Activated naive CD4-positive, alpha-beta T cell treated with anti-CD3 and anti-CD28 coated beads for 36 hours (primary cell): ENCODE measurements at regions of chr5 and their contacts with region 1.

Region 1: GRCh38 chr5:32613050-32613672 is 27.8 kb downstream of the SUB1 start:
- DNase-seq: peak; percentile 94
- H3K4me3 Mint-ChIP-seq: no peak overlapping the region
- H3K27ac Mint-ChIP-seq: no peak overlapping the region
- H3K4me1 Mint-ChIP-seq: peaks cover 3% of the 10 kb centered on the region
- H3K27me3 Mint-ChIP-seq: no peaks in the 10 kb centered on the region

Region 2: GRCh38 chr5:31825518-31826068 is 787.6 kb before region 1 on chr5:
- CTCF ChIA-PET with region 1: no interaction called
- intact Hi-C with region 1: loop called (anchors 5 kb)
- DNase-seq: peak; percentile 73
- H3K4me3 Mint-ChIP-seq: no peak overlapping the region
- H3K27ac Mint-ChIP-seq: no peak overlapping the region
- H3K4me1 Mint-ChIP-seq: peaks cover 1% of the 10 kb centered on the region
- H3K27me3 Mint-ChIP-seq: no peaks in the 10 kb centered on the region

Region 3: DNA sequence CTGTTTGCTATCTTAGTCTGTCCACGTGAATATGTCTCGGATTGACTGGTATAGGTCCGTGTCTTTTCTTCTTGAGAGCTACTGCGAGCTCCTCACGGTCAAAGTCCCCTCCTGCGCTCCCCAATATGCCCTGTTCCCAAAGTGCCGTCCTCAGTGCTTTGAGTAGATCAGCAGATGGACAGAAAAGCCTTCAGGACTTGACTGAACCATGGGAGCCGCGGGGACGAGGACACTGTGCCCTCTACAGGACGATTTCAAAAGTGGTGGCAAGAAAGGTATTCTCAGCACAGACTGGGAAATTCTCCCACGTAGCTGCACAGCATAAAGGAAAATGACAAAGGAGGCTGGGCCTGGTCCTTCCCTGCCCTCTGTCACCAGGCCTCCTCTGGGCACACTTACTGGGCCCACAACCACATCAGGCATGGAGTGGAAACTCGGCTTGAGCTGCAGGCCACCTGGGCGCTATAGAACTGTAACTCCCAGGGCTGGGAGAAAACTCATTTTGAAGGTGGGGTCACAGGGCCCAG is 283.8 kb before region 1 on chr5:
- CTCF ChIA-PET with region 1: no interaction called
- intact Hi-C with region 1: loop called (anchors 1 kb)
- DNase-seq: peak; percentile 75
- H3K4me3 Mint-ChIP-seq: no peak overlapping the region
- H3K27ac Mint-ChIP-seq: no peak overlapping the region
- H3K4me1 Mint-ChIP-seq: no peaks in the 10 kb centered on the region
- H3K27me3 Mint-ChIP-seq: no peaks in the 10 kb centered on the region

Region 4: GRCh38 chr5:32489791-32490582 is 123.2 kb before region 1 on chr5:
- CTCF ChIA-PET with region 1: interaction called, 50 read pairs
- intact Hi-C with region 1: loop called (anchors 1 kb)
- DNase-seq: peak; percentile 83
- H3K4me3 Mint-ChIP-seq: no peak overlapping the region
- H3K27ac Mint-ChIP-seq: no peak overlapping the region
- H3K4me1 Mint-ChIP-seq: peaks cover 1% of the 10 kb centered on the region
- H3K27me3 Mint-ChIP-seq: no peaks in the 10 kb centered on the region

Region 5: DNA sequence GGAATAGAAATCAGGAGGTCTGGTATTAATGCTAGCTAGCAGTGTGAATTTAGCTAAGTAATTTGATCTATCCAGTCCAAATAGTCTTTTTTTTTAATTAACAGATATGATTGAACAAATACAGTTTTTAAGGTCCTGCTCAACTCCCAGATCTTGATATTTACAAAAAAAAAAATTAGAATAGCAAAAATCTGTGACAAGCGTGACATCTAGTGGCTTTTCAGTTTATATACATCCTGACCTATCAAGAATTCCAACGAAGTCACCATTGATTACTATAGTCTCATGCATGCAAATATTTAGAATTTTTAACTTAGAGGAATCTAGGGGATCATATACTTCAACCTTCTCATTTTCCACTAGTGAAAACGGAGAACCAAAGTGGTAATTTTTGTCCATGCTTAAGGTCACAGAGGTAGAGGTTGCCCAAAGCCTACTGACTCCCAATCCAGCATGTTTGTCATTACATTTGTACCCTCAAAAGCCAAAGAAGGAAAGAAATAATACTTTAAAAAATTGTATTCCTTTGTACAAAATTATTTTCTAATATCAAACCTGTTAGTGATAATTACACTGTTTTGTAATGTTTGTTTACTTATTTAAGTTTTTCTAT is 810.0 kb after region 1 on chr5:
- CTCF ChIA-PET with region 1: no interaction called
- intact Hi-C with region 1: loop called (anchors 5 kb)
- DNase-seq: no peak
- H3K4me3 Mint-ChIP-seq: no peak overlapping the region
- H3K27ac Mint-ChIP-seq: no peak overlapping the region
- H3K4me1 Mint-ChIP-seq: no peaks in the 10 kb centered on the region
- H3K27me3 Mint-ChIP-seq: peaks cover 9% of the 10 kb centered on the region